Posterior vena cava (tissue), 2 donors: ENCODE measurements at regions of chr11 and their contacts with region 1.

Region 1: GRCh38 chr11:123011510-123011909 is 29.9 kb upstream of the BSX start:
- DNase-seq: no peak

Region 2: DNA sequence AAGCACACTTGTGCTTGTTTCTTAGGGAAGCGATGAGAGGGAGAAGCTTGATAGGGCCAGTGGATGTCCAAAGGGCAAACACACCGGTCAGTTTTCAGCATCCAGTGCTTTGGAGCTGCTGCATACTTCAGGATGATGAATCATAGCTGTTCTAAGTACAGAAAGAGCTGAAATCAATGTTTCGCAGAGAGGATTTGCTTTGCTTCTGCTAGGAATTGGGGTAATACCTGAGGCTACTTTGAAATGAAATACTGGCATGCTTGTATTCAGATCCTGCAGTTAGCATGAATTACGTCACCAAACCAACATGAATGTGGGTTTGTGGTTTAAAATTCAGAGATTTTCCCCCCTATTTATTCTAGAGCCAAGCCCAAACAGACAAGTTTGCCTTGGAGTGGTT is 1760.7 kb before region 1 on chr11:
- intact Hi-C with region 1: loop called in 1 of 2 experiments (anchors 10 kb)
- DNase-seq: no peak

Region 3: GRCh38 chr11:122778148-122778547 is 233.4 kb before region 1 on chr11:
- intact Hi-C with region 1: no loop called
- DNase-seq: no peak

Region 4: DNA sequence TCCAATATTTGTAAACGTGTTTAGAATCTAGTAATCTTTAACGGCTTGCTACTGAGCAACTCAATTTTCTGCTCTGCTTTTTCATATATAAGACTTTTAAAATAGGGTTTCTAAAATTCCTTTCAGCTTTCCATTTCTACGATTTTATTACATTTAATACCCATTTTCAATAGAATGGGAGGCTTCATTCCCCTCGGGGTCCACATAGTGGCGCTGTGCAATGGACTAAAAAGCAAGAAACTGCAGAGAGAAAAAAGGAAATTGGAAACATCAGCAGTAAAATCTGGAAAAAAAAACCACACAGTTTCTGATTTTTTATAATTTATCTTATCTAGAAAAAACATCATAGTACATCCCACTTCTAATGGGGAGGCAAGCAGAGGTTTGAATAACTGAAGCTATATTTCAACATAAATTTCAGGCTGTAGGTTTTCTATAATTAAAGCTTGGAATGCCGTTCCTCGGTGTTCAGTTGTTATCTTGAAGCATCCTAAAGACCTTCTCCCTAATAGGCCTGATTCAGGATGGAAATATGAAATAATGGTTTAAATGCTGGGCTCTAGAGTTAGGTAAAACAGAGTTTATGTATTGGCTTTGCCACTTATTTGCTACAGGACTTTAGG is 147.7 kb before region 1 on chr11:
- intact Hi-C with region 1: loop called in 1 of 2 experiments (anchors 10 kb)
- DNase-seq: no peak